ENCODE measurements at regions of chr18 and their contacts with region 1.

Region 1: GRCh38 chr18:24426398-24427294 is at the start of gene IMPACT:
- DNase-seq: peak; percentile 52 to 91 (median 74)
- ATAC-seq: peak; percentile 86
- H3K4me3 ChIP-seq: peak within 1 kb of the TSS; percentile 74
- H3K4me3 Mint-ChIP-seq: peak within 1 kb of the TSS; percentile 90
- H3K27ac ChIP-seq: no peak within 1 kb of the TSS
- H3K27ac Mint-ChIP-seq: peak within 1 kb of the TSS; percentile 72
- H3K4me1 ChIP-seq: peaks cover 17% of the 10 kb centered on the region
- H3K4me1 Mint-ChIP-seq: peaks cover 32% of the 10 kb centered on the region
- H3K27me3 ChIP-seq: peaks cover 0 to 12% of the 10 kb centered on the region in 2 experiments
- H3K27me3 Mint-ChIP-seq: peaks cover 30% of the 10 kb centered on the region
- CTCF ChIP-seq: no peak
- total RNA-seq, gene IMPACT: 8.4 to 10.6 TPM

Region 2: DNA sequence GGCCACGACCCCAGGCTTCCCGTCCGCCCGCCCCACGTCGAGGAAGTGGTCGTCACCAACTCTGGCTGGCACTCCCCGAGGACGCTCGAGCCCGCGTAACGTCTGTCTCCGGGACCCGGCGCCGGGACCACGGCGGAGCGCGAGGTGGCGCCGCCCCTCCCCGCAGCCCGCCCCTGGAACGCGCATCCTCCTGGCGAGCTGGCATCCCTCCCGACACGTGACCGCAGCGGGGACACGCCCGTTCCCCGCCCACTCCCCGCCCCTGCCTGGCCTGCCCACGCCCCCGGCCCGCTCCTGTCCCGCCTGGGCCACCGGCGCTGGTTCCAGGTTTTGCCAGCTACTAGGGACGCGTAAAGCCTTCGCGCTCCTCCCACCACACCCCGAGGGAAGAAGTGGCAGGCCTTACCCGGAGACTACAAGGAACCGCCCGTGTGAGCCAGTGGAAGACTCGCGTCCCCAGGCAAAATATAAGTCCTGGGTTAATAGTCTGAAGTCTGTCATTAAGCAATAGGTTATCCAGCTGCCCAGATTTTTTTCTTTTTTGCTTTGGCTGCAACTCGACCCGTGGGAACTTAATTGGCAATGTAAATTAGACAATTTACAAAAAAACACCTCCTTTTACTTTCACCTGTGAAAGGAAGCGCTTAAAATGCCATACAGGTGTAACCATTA is 28.8 kb before region 1 on chr18 and contains the start of gene OSBPL1A:
- CTCF ChIA-PET with region 1: no interaction called
- POLR2A ChIA-PET with region 1: interaction called, 6 read pairs
- intact Hi-C with region 1: loop called in 1 of 2 experiments (anchors 2 kb)
- DNase-seq: peak; percentile 66 to 89 (median 76)
- ATAC-seq: peak; percentile 90
- H3K4me3 ChIP-seq: peak within 1 kb of the TSS; percentile 66
- H3K4me3 Mint-ChIP-seq: peak within 1 kb of the TSS; percentile 90
- H3K27ac ChIP-seq: no peak within 1 kb of the TSS
- H3K27ac Mint-ChIP-seq: no peak within 1 kb of the TSS
- H3K4me1 ChIP-seq: peaks cover 15% of the 10 kb centered on the region
- H3K4me1 Mint-ChIP-seq: peaks cover 22% of the 10 kb centered on the region
- H3K27me3 ChIP-seq: peaks cover 0 to under 1% of the 10 kb centered on the region in 2 experiments
- H3K27me3 Mint-ChIP-seq: peaks cover 10% of the 10 kb centered on the region
- CTCF ChIP-seq: no peak
- total RNA-seq, gene OSBPL1A: 2.7 TPM

Region 3: DNA sequence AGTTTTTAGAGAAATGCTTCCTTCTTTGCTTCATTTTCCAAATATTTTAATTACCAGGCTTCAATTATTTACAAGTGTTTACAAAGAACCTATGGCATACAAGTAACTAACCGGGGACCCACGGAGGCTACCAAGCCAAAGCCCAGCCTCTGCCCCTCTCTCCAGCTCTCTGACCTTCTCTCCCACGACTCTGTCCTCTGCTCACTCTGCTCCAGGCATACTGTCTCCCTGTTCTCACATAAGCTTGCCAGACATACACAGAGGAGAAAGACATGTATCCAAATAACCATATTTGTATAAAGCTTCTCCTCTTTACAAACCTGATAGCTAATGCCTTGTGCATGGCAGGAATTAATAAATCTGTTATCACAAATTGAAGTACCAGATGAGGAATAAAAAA is 784.0 kb after region 1 on chr18:
- CTCF ChIA-PET with region 1: no interaction called
- POLR2A ChIA-PET with region 1: no interaction called
- intact Hi-C with region 1: no loop called
- DNase-seq: no peak
- ATAC-seq: no peak
- H3K4me3 ChIP-seq: no peak overlapping the region
- H3K4me3 Mint-ChIP-seq: no peak overlapping the region
- H3K27ac ChIP-seq: no peak overlapping the region
- H3K27ac Mint-ChIP-seq: no peak overlapping the region
- H3K4me1 ChIP-seq: no peaks in the 10 kb centered on the region
- H3K4me1 Mint-ChIP-seq: no peaks in the 10 kb centered on the region
- H3K27me3 ChIP-seq: no peaks in the 10 kb centered on the region
- H3K27me3 Mint-ChIP-seq: no peaks in the 10 kb centered on the region
- CTCF ChIP-seq: no peak

Measured in CD4-positive, alpha-beta T cell (primary cell).